ENCODE measurements at regions of chr12 and their contacts with region 1.

Region 1: DNA sequence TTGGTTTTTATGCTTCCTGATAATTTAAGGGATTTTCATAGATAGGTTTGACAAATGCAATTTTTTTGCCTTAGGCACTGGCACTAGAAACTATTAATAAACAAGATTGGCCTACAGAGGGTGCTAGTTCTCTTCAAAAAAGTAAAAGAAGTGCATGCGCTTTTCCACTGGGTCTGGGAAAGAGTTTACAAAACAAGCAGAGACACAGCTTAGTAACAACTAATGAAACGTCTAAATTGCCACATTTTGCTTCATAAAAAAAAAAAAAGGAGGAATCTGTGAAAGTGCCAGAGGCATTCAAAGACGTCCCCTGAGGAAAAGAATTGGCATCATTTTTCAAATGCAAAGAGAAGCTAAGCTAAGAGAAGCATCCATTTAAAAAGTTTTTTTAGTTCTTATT is 58.3 kb upstream of the EEA1 start:
- DNase-seq: peak in 1 of 2 experiments; percentile 75
- H3K4me3 ChIP-seq: no peak overlapping the region
- H3K4me3 Mint-ChIP-seq: peak overlapping the region; percentile 27
- H3K27ac Mint-ChIP-seq: peak overlapping the region; percentile 87
- H3K4me1 ChIP-seq: peaks cover 30% of the 10 kb centered on the region
- H3K4me1 Mint-ChIP-seq: peaks cover 33% of the 10 kb centered on the region
- H3K27me3 ChIP-seq: no peaks in the 10 kb centered on the region
- H3K27me3 Mint-ChIP-seq: no peaks in the 10 kb centered on the region
- CTCF ChIP-seq: peak; percentile 50 to 79

Region 2: DNA sequence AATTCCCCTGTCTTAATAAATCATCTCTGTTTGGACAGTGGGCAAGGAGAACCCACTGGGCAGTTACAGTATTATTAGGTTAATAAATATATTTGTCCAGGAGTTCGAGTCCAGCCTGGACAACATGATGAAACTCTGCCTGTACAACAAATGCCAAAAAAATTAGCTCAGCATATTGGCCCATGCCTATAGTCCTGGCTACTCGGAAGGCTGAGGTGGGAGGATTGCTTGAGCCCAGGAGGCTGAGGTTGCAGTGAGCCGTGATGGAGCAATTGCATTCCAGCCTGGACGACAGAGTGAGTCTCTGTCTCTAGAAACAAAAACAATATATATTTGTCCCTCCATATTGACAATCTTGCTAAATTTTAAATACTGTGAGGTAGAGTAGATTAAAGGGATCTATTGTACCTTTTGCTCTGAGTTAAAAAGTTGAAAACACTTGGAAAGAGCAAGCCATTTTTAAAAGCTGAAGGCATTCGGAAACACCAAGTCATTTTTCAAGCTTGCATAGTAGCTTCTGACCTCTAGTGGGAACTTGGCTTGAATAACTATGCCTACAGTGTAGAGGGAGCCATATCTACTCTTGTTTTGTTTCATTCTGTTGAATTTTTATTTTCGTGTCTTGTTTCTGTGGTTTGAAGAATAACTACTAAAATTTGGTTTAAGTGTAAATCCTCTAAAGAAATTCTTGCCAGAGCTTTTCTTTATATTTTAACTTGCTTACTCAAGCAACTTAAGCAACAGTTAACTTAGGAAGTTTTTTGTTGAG is 43.7 kb before region 1 on chr12:
- CTCF ChIA-PET with region 1: interaction called, 5 read pairs
- POLR2A ChIA-PET with region 1: interaction called, 4 read pairs
- intact Hi-C with region 1: loop called (anchors 2 kb)
- DNase-seq: no peak
- H3K4me3 ChIP-seq: no peak overlapping the region
- H3K4me3 Mint-ChIP-seq: no peak overlapping the region
- H3K27ac Mint-ChIP-seq: peak overlapping the region; percentile 80
- H3K4me1 ChIP-seq: peaks cover 43% of the 10 kb centered on the region
- H3K4me1 Mint-ChIP-seq: peaks cover 16% of the 10 kb centered on the region
- H3K27me3 ChIP-seq: no peaks in the 10 kb centered on the region
- H3K27me3 Mint-ChIP-seq: no peaks in the 10 kb centered on the region
- CTCF ChIP-seq: peak; percentile 12

Region 3: GRCh38 chr12:93042283-93042682 is 54.9 kb after region 1 on chr12:
- CTCF ChIA-PET with region 1: interaction called, 12 read pairs
- POLR2A ChIA-PET with region 1: no interaction called
- intact Hi-C with region 1: no loop called
- DNase-seq: peak; percentile 72 to 84
- H3K4me3 ChIP-seq: no peak overlapping the region
- H3K4me3 Mint-ChIP-seq: peak overlapping the region; percentile 37
- H3K27ac Mint-ChIP-seq: peak overlapping the region; percentile 87
- H3K4me1 ChIP-seq: peaks cover 46% of the 10 kb centered on the region
- H3K4me1 Mint-ChIP-seq: peaks cover 51% of the 10 kb centered on the region
- H3K27me3 ChIP-seq: no peaks in the 10 kb centered on the region
- H3K27me3 Mint-ChIP-seq: no peaks in the 10 kb centered on the region
- CTCF ChIP-seq: no peak

Region 4: DNA sequence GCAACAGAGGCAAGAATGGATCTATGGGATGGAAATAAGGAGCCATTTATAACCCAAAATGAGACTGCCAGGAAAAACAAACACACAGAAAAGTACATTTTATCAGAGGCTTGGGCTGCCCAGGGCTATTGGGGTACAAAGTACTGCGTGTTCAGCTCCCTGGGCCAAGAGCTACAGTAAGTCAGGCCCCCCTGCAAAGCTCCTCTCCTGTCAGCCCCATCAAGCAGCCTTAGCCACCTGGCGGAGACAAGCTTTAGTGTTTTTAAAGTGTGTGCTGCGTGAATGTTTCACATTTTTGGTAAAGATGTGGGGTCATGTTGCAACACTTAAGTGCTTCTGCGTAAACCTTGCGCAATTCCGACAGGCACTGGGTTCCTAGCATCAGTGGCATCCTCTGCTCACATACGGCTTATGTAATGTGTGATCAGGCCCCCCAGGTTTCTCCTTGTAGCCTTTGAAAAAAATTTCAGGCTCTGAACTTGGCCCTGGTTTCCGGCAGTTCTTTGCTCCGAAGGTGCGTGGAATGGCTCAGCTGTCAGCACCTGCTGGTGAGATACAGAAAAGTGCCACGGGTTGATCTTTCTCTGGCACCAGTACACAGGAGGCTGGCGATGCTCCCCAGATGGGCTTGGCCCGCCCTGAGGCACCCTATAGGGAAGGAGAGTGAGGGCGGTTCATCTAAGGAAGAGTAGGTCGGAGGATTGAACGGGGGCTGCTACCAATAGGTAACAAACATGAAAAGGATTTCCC is 140.4 kb after region 1 on chr12:
- CTCF ChIA-PET with region 1: interaction called, 10 read pairs
- POLR2A ChIA-PET with region 1: interaction called, 3 read pairs
- intact Hi-C with region 1: loop called (anchors 1 kb)
- DNase-seq: peak; percentile 89 to 93
- H3K4me3 ChIP-seq: no peak overlapping the region
- H3K4me3 Mint-ChIP-seq: peak overlapping the region; percentile 37
- H3K27ac Mint-ChIP-seq: peak overlapping the region; percentile 94
- H3K4me1 ChIP-seq: peaks cover 36% of the 10 kb centered on the region
- H3K4me1 Mint-ChIP-seq: peaks cover 43% of the 10 kb centered on the region
- H3K27me3 ChIP-seq: no peaks in the 10 kb centered on the region
- H3K27me3 Mint-ChIP-seq: no peaks in the 10 kb centered on the region
- CTCF ChIP-seq: peak; percentile 57 to 65

Region 5: DNA sequence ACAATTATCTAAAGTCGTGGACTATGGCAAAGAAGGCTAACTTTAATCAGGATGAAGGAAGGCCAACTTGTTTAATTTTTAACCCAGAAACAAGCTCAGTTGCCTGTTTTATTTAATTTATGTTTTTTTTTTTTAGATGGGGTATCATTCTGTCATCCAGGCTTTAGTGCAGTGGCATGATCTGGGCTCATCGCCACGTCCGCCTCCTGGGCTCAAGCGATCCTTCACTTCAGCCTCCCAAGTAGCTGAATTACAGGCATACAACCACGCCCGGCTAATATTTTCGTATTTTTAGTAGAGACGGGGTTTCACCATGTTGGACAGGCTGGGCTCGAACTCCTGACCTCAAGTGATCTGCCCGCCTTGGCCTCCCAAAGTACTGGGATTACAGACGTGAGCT is 410.1 kb after region 1 on chr12:
- CTCF ChIA-PET with region 1: no interaction called
- POLR2A ChIA-PET with region 1: no interaction called
- intact Hi-C with region 1: loop called (anchors 1 kb)
- DNase-seq: no peak
- H3K4me3 ChIP-seq: no peak overlapping the region
- H3K4me3 Mint-ChIP-seq: no peak overlapping the region
- H3K27ac Mint-ChIP-seq: peak overlapping the region; percentile 35
- H3K4me1 ChIP-seq: peaks cover 13% of the 10 kb centered on the region; the same call in 1 of the 2 replicates
- H3K4me1 Mint-ChIP-seq: no peaks in the 10 kb centered on the region
- H3K27me3 ChIP-seq: no peaks in the 10 kb centered on the region
- H3K27me3 Mint-ChIP-seq: no peaks in the 10 kb centered on the region
- CTCF ChIP-seq: no peak